Caco-2 (cell line): ENCODE measurements at regions of chrX and their contacts with region 1.

Region 1: DNA sequence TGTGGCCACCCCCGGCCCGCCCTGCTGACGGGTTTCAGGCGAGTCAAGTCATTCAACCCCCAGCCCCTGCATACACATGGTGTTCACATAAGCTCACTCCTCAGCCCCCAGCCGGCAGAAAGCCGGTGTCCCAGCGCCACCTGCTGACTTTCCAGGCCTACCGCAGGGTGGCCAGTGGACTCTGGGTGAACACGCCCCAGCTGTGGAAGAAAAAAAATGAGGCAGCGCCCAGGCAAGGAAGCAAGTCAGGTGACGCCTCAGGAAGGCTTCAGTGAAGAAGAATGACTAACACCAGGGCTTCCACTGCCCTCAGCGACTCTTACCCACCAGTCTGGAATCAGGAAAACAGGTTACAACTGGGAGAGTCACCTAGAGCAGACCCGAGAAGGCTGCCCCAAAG is 15.8 kb downstream of the BCAP31 start:
- DNase-seq: peak; percentile 81 to 83
- H3K4me3 ChIP-seq: no peak overlapping the region
- H3K4me3 Mint-ChIP-seq: no peak overlapping the region
- H3K27ac Mint-ChIP-seq: peak overlapping the region; percentile 29
- H3K4me1 ChIP-seq: no peaks in the 10 kb centered on the region
- H3K4me1 Mint-ChIP-seq: peaks cover 8% of the 10 kb centered on the region
- H3K27me3 ChIP-seq: no peaks in the 10 kb centered on the region
- H3K27me3 Mint-ChIP-seq: no peaks in the 10 kb centered on the region
- CTCF ChIP-seq: peak in 1 of 2 experiments; percentile 78

Region 2: GRCh38 chrX:153539171-153539978 is 169.0 kb before region 1 on chrX:
- CTCF ChIA-PET with region 1: interaction called, 3 read pairs
- POLR2A ChIA-PET with region 1: interaction called, 14 read pairs
- intact Hi-C with region 1: no loop called
- DNase-seq: peak; percentile 60 to 76
- H3K4me3 ChIP-seq: no peak overlapping the region
- H3K4me3 Mint-ChIP-seq: no peak overlapping the region
- H3K27ac Mint-ChIP-seq: no peak overlapping the region
- H3K4me1 ChIP-seq: no peaks in the 10 kb centered on the region
- H3K4me1 Mint-ChIP-seq: no peaks in the 10 kb centered on the region
- H3K27me3 ChIP-seq: no peaks in the 10 kb centered on the region
- H3K27me3 Mint-ChIP-seq: no peaks in the 10 kb centered on the region
- CTCF ChIP-seq: peak; percentile 59 to 91

Region 3: DNA sequence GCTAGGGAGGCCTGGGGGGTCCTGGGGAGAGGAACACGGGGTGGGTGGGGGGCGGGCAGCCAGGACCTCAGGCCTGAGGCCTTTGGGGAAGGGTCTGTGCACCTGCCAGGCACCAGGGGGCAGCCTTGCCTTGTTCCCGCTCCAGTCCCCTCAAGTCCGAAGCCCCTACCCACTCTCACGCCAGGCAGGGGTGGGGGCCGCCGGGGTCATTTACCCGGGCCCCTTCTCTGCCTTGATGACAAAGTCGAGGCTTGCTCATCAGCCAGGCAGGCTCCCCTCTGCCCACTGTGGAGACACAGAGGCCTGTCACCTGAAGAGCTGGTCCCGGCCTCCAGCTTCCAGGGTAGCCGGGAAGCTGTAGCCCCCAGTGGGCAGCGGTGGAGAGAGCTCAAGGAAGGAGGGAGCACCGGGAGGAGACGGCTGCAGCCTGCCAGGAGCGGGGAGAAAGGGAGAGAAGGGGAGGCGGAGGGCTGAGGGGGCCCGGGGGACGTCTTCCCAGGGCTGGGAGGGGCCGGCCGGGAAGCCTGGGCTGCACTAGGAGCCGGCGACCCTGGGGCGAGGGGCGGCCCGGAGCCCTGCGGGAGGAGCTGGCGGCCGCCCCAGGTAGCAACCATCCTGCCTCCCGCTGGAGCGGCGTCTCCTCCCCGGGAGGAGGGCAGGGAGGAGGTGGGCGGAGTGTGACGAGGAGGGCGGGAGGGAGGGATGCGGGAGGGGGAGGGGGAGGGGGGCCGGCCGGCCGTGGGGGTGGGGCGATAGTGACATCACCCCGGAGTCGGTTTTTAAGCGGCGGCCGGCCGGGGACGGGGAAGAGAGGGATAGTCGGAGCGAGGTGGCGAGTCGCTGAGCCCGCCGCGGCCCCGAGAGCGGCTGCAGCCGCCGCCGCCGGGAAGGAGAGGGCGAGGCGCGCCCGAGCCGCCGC is 21.0 kb before region 1 on chrX and contains the start of gene SLC6A8:
- CTCF ChIA-PET with region 1: interaction called, 13 read pairs
- POLR2A ChIA-PET with region 1: no interaction called
- intact Hi-C with region 1: loop called (anchors 1 kb)
- DNase-seq: peak; percentile 68 to 71
- H3K4me3 ChIP-seq: peak within 1 kb of the TSS; percentile 35
- H3K4me3 Mint-ChIP-seq: peak within 1 kb of the TSS; percentile 77
- H3K27ac Mint-ChIP-seq: peak within 1 kb of the TSS; percentile 35
- H3K4me1 ChIP-seq: no peaks in the 10 kb centered on the region
- H3K4me1 Mint-ChIP-seq: no peaks in the 10 kb centered on the region
- H3K27me3 ChIP-seq: no peaks in the 10 kb centered on the region
- H3K27me3 Mint-ChIP-seq: no peaks in the 10 kb centered on the region
- CTCF ChIP-seq: peak; percentile 46 to 54
- total RNA-seq, gene SLC6A8: 8.8 and 11.2 TPM in 2 replicates

Region 4: DNA sequence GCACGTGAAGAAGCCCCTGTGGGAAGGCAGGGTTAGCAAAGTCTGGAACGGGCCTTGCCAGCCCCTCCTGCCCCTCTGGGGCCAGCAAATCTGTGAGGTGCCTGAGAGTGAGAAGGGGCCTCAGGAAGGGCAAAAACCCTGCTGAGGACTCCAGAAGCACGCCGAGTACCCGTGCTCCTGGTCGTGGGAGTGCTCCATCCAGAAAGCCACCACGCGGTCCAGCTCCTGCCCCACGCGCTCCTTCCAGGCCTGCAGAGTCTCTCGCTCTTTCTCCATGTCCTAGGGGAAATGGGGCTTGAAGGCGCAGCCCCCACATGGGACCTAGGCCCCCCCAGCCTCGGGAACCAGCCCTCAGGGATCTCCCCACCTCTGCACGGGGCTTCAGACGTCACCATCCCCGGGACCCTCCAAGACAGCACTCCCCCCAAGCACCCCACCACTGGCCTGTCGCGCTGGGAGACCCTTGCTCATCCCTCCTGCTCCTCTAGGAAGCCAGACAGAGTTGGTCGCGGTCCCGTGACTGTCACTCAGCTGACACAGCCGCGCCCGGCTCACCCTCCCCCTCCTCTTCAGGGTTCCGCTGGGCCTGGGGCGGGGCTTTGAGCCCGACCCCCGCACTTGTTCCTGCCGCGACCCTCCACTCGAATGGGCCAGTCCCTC is 235.9 kb after region 1 on chrX and contains the start of gene RENBP:
- CTCF ChIA-PET with region 1: no interaction called
- POLR2A ChIA-PET with region 1: no interaction called
- intact Hi-C with region 1: no loop called
- DNase-seq: no peak
- H3K4me3 ChIP-seq: no peak within 1 kb of the TSS
- H3K4me3 Mint-ChIP-seq: no peak within 1 kb of the TSS
- H3K27ac Mint-ChIP-seq: no peak within 1 kb of the TSS
- H3K4me1 ChIP-seq: 0 out of 2 replicates have a peak, but pooled peaks cover 6% of the 10 kb centered on the region
- H3K4me1 Mint-ChIP-seq: peaks cover 5% of the 10 kb centered on the region
- H3K27me3 ChIP-seq: no peaks in the 10 kb centered on the region
- H3K27me3 Mint-ChIP-seq: no peaks in the 10 kb centered on the region
- CTCF ChIP-seq: no peak
- total RNA-seq, gene RENBP: 0.75 and 1.2 TPM in 2 replicates